ENCODE measurements at regions of chr3 and their contacts with region 1.

Region 1: GRCh38 chr3:38117748-38118420 is 19.0 kb downstream of the ACAA1 start:
- DNase-seq: no peak
- H3K4me3 ChIP-seq: no peak overlapping the region
- CTCF ChIP-seq: peak; percentile 84

Region 2: DNA sequence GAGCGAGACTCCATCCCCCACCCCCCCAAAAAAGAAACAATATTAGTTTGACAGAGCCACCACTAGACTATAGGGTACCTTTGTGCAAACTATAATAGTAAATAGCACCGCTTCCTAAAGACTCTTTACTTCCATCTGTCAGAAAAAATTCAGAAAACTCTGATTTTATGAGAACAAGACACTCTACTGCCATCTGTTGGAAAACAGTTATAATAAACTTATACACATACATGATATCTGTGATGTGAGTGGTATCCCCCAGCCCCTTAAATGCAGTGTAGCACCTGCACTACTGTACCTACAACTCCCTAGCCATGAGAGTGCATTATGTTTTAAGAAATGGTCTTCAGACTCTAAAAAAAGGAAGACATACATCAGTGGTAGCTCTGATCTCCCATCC is 303.3 kb before region 1 on chr3:
- CTCF ChIA-PET with region 1: no interaction called
- POLR2A ChIA-PET with region 1: no interaction called
- DNase-seq: no peak
- H3K4me3 ChIP-seq: no peak overlapping the region
- CTCF ChIP-seq: no peak

Region 3: DNA sequence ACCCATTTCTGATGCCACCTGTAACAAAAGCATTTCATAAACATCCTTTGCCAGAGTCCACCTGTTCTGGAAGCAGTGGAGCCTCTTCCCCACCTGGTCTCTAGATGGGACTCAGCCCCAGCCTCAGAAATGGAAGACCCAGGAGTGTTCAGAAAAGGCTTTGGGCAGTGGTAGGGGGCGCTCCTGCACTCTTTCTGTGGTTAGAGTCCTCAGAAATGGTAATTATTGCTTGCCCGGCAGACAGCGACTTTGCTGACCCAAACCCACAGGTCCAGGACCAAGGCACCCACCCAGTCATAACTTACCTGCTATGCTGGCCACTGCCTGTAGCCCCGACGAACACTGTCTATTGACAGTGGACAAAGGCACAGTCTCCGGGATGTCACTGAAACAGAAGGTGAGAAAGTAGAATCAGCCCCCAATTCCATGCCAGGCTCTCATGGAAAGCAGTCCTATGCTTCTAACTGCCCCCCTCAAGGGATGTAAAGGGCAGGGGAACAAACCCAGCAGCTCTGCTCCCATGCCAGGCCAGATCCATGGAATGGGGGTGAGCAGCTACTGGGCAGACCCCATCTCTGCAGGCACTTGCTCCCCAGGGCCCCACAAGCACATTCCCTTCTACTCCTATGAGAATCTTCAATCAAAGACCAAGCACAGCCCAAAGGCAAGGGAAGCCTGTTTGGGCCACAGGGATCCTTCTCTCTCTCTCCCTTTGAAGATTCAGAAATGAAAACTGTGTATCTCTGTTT is 13.9 kb after region 1 on chr3:
- CTCF ChIA-PET with region 1: interaction called, 51 read pairs
- POLR2A ChIA-PET with region 1: interaction called, 3 read pairs
- DNase-seq: no peak
- H3K4me3 ChIP-seq: no peak overlapping the region
- CTCF ChIP-seq: peak; percentile 57

Region 4: GRCh38 chr3:38247366-38248035 is 129.6 kb after region 1 on chr3:
- CTCF ChIA-PET with region 1: interaction called, 11 read pairs
- POLR2A ChIA-PET with region 1: no interaction called
- DNase-seq: peak; percentile 71
- H3K4me3 ChIP-seq: no peak overlapping the region
- CTCF ChIP-seq: peak; percentile 35

Region 5: DNA sequence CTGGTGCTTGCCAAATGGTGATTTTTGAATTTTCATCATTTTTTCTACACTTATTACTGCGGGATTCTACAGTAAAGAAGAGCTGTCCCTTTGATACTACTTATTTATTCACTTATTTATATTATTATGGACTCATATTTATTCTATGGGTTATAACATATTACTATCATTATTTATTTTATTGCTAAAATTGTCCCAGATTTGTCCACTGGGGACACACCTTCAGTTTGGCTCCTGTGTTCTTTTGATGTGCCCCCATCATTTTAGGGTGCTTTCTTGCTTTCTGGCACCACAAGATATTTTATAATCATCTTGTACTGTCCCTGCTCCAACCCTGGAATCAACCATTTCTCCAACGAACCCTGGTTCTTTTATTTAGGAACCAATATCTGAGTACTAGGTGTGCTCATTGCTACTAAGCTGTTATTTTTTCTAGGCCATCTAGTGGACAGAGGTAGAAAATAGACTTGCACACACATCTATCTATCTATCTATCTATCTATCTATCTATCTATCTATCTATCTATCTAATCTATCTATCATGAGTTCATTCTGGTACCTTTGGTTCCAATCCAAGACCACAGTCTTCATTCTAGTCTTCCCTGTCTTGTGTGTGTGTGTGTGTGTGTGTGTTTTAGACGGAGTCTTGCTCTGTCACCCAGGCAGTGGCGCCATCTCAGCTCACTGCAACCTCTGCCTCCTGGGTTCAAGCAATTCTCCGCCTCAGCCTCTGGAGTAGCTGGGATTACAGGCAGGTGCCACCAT is 180.2 kb after region 1 on chr3:
- CTCF ChIA-PET with region 1: interaction called, 29 read pairs
- POLR2A ChIA-PET with region 1: no interaction called
- DNase-seq: no peak
- H3K4me3 ChIP-seq: no peak overlapping the region
- CTCF ChIP-seq: peak; percentile 20

Measured in AG04449 (cell line).